ENCODE measurements at regions of chr12 and their contacts with region 1.

Region 1: GRCh38 chr12:49842519-49843352 is at the start of gene BCDIN3D:
- DNase-seq: peak; percentile 98
- total RNA-seq, gene BCDIN3D: 2.5 to 4.0 TPM

Region 2: DNA sequence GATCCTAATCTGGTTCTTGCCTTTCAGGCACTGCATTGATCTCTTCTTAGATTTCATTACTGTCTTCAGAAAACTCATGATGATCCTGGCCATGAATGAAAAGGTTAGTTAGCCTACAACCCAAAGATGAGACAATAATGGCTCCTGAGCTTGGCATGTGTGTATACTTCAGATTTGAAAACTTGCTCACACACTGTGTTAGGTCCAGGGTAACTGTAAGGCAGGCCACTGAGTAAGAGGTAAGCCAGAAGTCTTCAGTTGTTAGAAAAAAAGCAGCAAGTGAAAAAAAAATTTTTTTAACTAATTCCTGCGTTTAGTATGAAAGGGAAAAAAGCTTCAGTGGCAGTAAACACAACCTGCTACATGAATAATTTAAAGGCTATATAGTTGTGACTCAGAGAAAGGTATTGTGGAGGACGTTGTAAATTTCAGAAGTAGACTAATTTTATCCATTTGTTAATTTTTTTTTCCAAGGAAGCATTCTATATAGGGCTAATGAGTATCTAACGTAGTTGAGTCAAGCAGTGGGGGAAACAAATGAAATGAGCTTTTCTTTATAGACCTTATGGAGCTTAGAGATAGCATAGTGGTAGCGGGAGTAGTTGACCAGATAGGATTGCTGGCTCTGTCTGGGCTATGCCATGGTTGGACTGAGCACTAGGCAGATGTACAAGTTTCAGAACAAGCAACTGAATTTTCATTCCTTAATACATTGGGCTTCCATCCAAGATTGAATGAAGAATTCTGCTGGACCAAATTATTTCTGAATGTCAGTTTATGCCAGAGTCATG is 80.9 kb before region 1 on chr12:
- intact Hi-C with region 1: loop called in 1 of 2 experiments (anchors 2 kb)
- DNase-seq: no peak

Region 3: GRCh38 chr12:49776413-49776812 is 66.3 kb before region 1 on chr12:
- intact Hi-C with region 1: loop called in 1 of 2 experiments (anchors 5 kb)
- DNase-seq: peak; percentile 89

Region 4: DNA sequence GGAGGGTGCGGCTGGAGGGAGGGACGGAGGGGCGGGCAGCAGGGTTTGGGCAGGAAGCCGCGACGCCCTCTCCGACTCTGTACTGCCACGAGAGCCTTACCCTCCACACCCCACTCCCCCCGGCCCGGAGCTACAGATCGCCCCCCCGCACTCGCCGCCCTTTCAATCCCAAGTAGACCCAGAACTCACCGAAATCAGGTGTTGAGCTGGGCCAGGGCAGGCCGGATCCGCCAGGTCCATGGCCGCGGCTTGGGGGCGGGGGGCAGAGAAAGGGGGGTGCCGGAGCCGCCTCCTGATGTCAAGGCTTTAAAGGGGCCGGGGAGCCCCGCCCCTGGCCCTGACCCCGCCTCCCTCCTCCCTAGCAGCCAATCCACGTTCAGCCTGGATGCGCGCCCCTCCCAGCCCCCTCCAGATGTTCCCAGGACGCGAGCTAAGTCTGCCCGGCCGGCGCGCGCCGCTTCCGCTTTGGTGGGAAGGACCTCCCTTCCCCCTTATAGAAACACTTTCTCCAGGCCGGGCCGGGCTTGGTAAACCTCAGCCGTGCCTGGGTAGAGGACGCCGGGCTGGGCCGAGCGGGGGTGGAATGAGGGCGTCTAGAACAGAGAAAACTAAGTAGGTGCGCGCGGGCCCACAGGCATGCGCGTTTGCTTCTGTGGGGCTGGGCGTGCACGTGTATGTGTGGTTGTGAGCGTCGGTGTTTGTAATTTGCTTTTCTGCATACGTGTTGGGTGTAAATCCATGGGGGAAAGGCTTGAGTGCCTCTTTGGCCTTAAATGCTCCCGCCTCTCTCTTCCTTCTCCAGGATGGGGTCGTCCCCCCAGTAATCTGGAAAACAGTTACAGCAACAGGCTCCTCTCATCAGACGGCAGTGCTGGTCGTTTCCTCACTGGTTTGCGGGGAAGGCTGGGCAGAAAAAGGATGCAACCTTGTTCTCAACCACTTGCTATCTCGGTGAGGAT is 14.3 kb before region 1 on chr12 and contains the start of gene NCKAP5L:
- intact Hi-C with region 1: loop called in 1 of 2 experiments (anchors 2 kb)
- DNase-seq: peak; percentile 99
- total RNA-seq, gene NCKAP5L: 16.2 to 22.4 TPM

Region 5: GRCh38 chr12:50261654-50262053 is 418.9 kb after region 1 on chr12:
- intact Hi-C with region 1: no loop called
- DNase-seq: no peak